Mammary epithelial cell (primary cell): ENCODE measurements at regions of chr22 and their contacts with region 1.

Region 1: GRCh38 chr22:35430897-35431322 is 31.0 kb downstream of the MCM5 start:
- DNase-seq: peak; percentile 87
- H3K4me3 ChIP-seq: no peak overlapping the region
- H3K27ac ChIP-seq: peak overlapping the region; percentile 44
- H3K4me1 ChIP-seq: peaks cover 16% of the 10 kb centered on the region
- H3K27me3 ChIP-seq: no peaks in the 10 kb centered on the region
- CTCF ChIP-seq: peak; percentile 82 to 98

Region 2: GRCh38 chr22:35350539-35351503 is 80.1 kb before region 1 on chr22:
- CTCF ChIA-PET with region 1: interaction called, 3 read pairs
- dilution Hi-C with region 1: loop called (anchors 5 kb)
- in situ Hi-C with region 1: no loop called
- intact Hi-C with region 1: loop called (anchors 1 kb)
- DNase-seq: peak; percentile 84
- H3K4me3 ChIP-seq: peak overlapping the region; percentile 50 to 52 (median 51)
- H3K27ac ChIP-seq: peak overlapping the region; percentile 47
- H3K4me1 ChIP-seq: peaks cover 8% of the 10 kb centered on the region
- H3K27me3 ChIP-seq: no peaks in the 10 kb centered on the region
- CTCF ChIP-seq: peak; percentile 71 to 82

Region 3: DNA sequence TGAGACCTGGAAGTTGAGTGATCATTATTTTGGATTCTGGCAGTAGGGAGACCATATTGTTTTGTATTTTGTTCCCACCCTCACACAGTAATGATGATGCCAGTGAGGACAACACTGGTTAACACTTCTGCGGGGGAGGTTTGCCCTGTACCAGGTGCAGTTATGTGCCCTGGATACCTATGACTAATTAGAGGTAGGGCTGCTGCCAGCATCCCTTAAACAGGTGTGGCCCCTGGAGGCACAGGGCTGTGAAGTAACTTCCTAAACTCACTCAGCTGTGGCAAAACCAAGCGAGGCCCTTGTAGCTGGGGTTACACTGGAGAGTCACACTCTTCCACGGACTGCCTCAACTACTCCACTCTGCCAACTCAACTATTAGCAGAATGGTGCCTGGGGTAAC is 33.5 kb after region 1 on chr22:
- CTCF ChIA-PET with region 1: no interaction called
- dilution Hi-C with region 1: no loop called
- in situ Hi-C with region 1: no loop called
- intact Hi-C with region 1: loop called (anchors 1 kb)
- DNase-seq: no peak
- H3K4me3 ChIP-seq: no peak overlapping the region
- H3K27ac ChIP-seq: no peak overlapping the region
- H3K4me1 ChIP-seq: peaks cover 7% of the 10 kb centered on the region
- H3K27me3 ChIP-seq: no peaks in the 10 kb centered on the region
- CTCF ChIP-seq: no peak

Region 4: GRCh38 chr22:35582861-35583670 is 152.2 kb after region 1 on chr22:
- CTCF ChIA-PET with region 1: interaction called, 5 read pairs
- dilution Hi-C with region 1: loop called (anchors 5 kb)
- in situ Hi-C with region 1: loop called (anchors 5 kb)
- intact Hi-C with region 1: loop called (anchors 1 kb)
- DNase-seq: no peak
- H3K4me3 ChIP-seq: no peak overlapping the region
- H3K27ac ChIP-seq: no peak overlapping the region
- H3K4me1 ChIP-seq: peaks cover under 1% of the 10 kb centered on the region
- H3K27me3 ChIP-seq: no peaks in the 10 kb centered on the region
- CTCF ChIP-seq: peak; percentile 85 to 93

Region 5: DNA sequence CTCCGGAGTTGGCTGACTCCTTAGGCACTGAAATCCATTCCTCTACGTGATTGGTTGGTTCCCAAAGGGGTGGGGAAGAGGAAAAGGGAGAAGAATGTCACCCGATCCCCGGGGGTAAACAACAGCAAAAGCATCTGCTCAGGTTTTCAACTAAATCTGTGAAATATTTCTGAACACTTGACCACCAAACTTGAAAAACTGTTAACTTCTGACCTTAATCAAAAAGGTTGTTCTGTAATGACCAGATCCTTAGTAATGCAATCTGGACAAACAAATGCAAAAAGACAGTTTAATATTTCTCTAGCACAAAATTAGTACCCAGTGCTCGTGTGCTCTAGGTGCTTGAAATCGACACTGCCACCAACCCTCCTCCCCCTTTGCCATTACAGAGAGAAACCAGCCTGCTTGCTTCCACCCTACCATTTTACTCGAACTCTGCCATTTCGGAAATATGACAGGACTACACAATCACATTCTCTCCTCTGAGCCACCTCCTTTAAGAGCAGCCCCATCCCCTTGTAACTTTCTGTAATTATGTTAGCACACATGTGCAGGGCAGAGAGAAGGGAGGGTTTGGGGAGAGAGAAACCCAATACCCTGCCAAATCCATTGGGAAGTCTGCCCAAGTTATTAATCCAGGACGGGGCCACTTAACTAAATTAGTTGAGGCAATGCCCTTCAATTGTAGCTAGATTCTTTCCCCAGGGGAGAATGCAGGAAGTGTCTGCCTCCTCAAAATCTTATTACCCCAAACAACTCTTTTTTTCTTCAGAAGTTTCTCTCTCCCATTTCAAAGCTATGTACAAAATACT is 484.0 kb after region 1 on chr22:
- CTCF ChIA-PET with region 1: no interaction called
- dilution Hi-C with region 1: no loop called
- in situ Hi-C with region 1: no loop called
- intact Hi-C with region 1: loop called (anchors 10 kb)
- DNase-seq: peak; percentile 91
- H3K4me3 ChIP-seq: peak overlapping the region; percentile 38 to 49 (median 41)
- H3K27ac ChIP-seq: peak overlapping the region; percentile 74
- H3K4me1 ChIP-seq: peaks cover 52% of the 10 kb centered on the region
- H3K27me3 ChIP-seq: no peaks in the 10 kb centered on the region
- CTCF ChIP-seq: no peak

Region 6: DNA sequence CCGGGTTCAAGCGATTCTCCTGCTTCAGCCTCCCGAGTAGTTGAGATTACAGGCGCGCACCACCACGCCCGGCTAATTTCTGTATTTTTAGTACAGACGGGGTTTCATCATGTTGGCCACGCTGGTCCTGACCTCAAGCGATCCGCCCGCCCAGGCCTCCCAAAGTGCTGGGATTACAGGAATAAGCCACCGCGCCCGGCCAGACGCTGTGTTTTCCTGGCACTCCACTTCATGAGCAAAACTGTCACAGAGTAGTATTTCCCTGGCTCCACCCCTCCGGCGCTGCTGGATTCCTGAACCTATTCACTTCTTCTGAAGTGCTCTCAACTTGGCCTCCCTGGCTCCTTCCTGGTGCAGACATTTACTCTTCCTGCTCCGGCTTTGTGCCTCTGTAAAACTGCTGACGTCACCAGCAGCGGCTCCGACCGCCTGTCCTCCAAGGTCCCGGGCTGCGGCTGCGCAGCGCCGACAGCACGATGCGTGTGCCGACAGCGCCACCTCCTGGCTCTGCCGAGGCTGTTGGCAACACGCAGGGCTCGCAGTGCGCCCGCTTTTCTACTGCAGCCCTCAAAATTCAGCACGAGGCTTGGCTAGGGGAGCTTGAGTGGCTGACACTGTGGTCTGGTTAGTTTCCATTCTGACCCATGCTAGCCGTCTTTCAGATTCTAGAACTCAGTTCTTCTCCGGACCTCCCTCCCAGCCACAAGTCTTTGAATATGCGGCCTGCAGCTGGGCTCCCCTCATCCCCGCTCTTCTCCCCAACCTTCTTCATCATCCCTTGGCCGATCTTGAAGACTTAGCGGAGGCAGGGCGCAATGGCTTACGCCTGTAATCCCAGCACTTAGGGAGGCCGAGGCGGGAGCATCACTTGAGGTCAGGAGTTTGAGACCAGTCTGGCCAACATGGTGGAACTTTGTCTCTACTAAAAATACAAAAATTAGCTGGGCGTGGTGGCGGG is 693.0 kb after region 1 on chr22:
- CTCF ChIA-PET with region 1: no interaction called
- dilution Hi-C with region 1: loop called (anchors 5 kb)
- in situ Hi-C with region 1: loop called in 1 of 2 experiments (anchors 10 kb)
- intact Hi-C with region 1: loop called (anchors 1 kb)
- DNase-seq: peak; percentile 88
- H3K4me3 ChIP-seq: peak overlapping the region in 1 of 3 experiments; percentile 45
- H3K27ac ChIP-seq: peak overlapping the region; percentile 23
- H3K4me1 ChIP-seq: no peaks in the 10 kb centered on the region
- H3K27me3 ChIP-seq: no peaks in the 10 kb centered on the region
- CTCF ChIP-seq: peak; percentile 91 to 99